Activated CD4-positive, alpha-beta T cell treated with anti-CD3 and anti-CD28 coated beads for 36 hours (primary cell): ENCODE measurements at regions of chr1 and their contacts with region 1.

Region 1: GRCh38 chr1:223133824-223134435 is 9.1 kb downstream of the TLR5 start:
- DNase-seq: peak; percentile 89
- ATAC-seq: peak; percentile 88
- H3K4me3 Mint-ChIP-seq: peak overlapping the region; percentile 33
- H3K27ac Mint-ChIP-seq: no peak overlapping the region
- H3K4me1 Mint-ChIP-seq: peaks cover 15% of the 10 kb centered on the region
- H3K27me3 Mint-ChIP-seq: peaks cover 9% of the 10 kb centered on the region

Region 2: DNA sequence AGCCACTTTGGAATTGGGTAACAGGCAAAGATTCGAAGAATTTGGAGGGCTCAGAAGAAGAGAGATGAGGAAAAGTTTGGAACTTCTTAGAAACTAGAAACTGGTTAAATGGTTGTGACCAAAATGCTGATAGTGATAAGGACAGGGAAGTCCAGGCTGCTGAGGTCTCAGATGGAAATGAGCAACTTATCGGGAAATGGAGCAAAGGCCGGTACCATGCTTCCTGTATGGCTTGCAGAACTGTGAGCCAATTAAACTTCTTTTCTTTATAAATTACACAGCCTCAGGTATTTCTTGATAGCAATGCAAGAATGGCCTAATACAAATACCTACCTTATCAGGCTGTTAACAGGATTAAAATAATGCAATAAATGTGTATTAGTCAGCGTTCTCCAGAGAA is 18.5 kb after region 1 on chr1:
- CTCF ChIA-PET with region 1: interaction called, 17 read pairs
- POLR2A ChIA-PET with region 1: no interaction called
- intact Hi-C with region 1: no loop called
- DNase-seq: no peak
- ATAC-seq: no peak
- H3K4me3 Mint-ChIP-seq: no peak overlapping the region
- H3K27ac Mint-ChIP-seq: no peak overlapping the region
- H3K4me1 Mint-ChIP-seq: peaks cover 13% of the 10 kb centered on the region
- H3K27me3 Mint-ChIP-seq: no peaks in the 10 kb centered on the region

Region 3: GRCh38 chr1:223207293-223208066 is 73.5 kb after region 1 on chr1:
- CTCF ChIA-PET with region 1: interaction called, 11 read pairs
- POLR2A ChIA-PET with region 1: no interaction called
- intact Hi-C with region 1: no loop called
- DNase-seq: no peak
- ATAC-seq: no peak
- H3K4me3 Mint-ChIP-seq: no peak overlapping the region
- H3K27ac Mint-ChIP-seq: no peak overlapping the region
- H3K4me1 Mint-ChIP-seq: no peaks in the 10 kb centered on the region
- H3K27me3 Mint-ChIP-seq: no peaks in the 10 kb centered on the region

Region 4: DNA sequence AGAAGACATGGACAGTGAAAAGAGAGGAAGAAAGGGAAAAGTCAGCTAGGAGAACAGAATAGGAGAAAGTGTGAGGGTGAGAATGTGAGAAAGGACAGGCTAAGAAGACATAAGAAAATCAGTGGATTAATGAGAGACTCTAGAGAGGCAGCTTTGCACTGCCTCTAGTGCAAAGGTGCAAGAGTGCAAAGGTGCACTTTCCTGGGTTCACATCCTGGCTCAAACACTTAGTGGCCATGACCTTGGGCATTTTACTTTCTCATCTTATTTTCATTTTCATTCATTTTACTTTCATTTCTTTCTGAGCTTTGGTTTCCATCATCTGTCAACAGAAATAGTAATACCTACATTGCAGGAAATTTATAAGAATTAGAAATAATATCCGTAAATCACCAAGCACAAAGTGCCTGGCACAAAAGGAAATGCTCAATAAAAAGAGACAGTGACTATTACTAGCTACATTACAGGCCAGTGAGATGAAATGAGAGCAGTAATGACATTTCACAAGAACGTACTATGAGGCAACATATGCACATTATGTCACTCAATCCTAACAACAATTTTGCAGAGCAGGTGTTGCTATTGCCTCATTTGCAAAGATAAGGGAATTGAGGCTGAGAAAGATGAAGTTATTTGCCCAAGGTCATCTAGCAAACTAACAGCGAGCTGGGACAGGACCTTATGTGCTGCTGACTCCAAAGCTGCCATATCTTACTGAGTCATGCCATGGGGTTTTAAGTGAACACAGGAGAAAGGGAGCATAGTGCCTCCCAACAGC is 116.1 kb after region 1 on chr1:
- CTCF ChIA-PET with region 1: interaction called, 35 read pairs
- POLR2A ChIA-PET with region 1: no interaction called
- intact Hi-C with region 1: no loop called
- DNase-seq: no peak
- ATAC-seq: no peak
- H3K4me3 Mint-ChIP-seq: no peak overlapping the region
- H3K27ac Mint-ChIP-seq: no peak overlapping the region
- H3K4me1 Mint-ChIP-seq: peaks cover 31% of the 10 kb centered on the region
- H3K27me3 Mint-ChIP-seq: no peaks in the 10 kb centered on the region

Region 5: GRCh38 chr1:223683586-223684487 is 549.9 kb after region 1 on chr1:
- CTCF ChIA-PET with region 1: interaction called, 18 read pairs
- POLR2A ChIA-PET with region 1: no interaction called
- intact Hi-C with region 1: loop called (anchors 1 kb)
- DNase-seq: peak; percentile 73
- ATAC-seq: peak; percentile 57
- H3K4me3 Mint-ChIP-seq: no peak overlapping the region
- H3K27ac Mint-ChIP-seq: no peak overlapping the region
- H3K4me1 Mint-ChIP-seq: no peaks in the 10 kb centered on the region
- H3K27me3 Mint-ChIP-seq: peaks cover under 1% of the 10 kb centered on the region